Activated CD4-positive, alpha-beta memory T cell treated with anti-CD3 and anti-CD28 coated beads for 36 hours (primary cell): ENCODE measurements at regions of chr15 and their contacts with region 1.

Region 1: DNA sequence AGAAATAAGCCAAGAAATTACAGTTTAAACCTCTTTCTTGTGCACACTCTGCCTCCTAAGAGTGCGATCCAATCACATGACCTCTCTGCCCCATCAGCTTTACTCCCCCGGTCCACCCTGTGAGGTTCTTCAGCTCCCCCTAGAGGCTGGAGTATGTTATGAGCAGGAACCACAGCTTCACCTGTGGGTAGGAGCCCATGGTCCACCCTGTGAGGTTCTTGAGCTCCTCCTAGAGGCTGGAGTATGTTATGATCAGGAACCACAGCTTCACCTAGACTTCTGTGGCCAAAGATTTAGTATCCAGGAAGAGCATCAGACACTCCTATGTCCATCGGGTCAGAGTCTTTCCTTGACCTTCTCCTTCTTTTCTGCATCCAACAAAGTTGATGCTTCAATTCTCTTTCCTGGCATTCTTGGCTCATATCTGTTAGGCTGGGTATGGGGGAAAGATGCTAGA is 163.9 kb downstream of the MINAR1 start:
- DNase-seq: peak; percentile 73
- H3K4me3 Mint-ChIP-seq: no peak overlapping the region
- H3K27ac Mint-ChIP-seq: no peak overlapping the region
- H3K4me1 Mint-ChIP-seq: no peaks in the 10 kb centered on the region
- H3K27me3 Mint-ChIP-seq: peaks cover 12% of the 10 kb centered on the region

Region 2: DNA sequence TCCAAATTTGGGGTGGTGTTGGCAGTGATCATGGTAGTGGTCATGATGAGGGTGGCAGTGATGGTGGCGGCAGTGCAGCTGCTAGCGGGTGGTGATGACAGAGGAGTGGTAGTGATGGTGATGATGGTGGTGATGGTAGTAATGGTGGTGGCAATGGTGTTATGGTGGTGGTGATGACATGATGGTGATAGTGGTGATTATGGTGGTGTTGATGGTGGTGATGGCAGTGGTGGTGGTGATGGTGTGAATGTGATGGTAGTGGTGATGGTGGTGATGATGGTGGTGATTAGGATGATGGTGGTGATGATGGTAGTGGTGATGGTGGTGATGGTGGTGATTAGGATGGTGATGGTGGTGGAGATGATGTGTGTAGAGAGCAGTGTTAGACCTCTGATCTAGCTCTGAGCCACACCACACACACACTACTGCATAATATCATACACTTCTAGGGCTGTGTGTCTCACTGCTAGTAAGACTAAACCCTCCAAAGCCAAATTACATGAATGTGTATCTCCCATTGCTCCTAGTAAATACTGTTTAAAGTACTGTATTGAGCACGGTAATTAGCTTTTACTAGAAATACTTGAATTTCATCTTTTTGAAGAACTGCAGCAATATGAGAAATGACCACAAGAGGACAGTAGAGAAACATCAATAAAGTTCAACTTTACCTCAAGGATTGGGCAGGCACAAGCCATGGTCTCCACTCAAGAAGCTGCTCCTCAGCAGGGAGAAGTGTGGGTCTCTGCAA is 256.3 kb before region 1 on chr15:
- CTCF ChIA-PET with region 1: interaction called, 25 read pairs
- POLR2A ChIA-PET with region 1: no interaction called
- intact Hi-C with region 1: no loop called
- DNase-seq: no peak
- H3K4me3 Mint-ChIP-seq: no peak overlapping the region
- H3K27ac Mint-ChIP-seq: no peak overlapping the region
- H3K4me1 Mint-ChIP-seq: no peaks in the 10 kb centered on the region
- H3K27me3 Mint-ChIP-seq: no peaks in the 10 kb centered on the region

Region 3: GRCh38 chr15:79467865-79468586 is 128.1 kb before region 1 on chr15:
- CTCF ChIA-PET with region 1: no interaction called
- POLR2A ChIA-PET with region 1: no interaction called
- intact Hi-C with region 1: no loop called
- DNase-seq: no peak
- H3K4me3 Mint-ChIP-seq: no peak overlapping the region
- H3K27ac Mint-ChIP-seq: no peak overlapping the region
- H3K4me1 Mint-ChIP-seq: no peaks in the 10 kb centered on the region
- H3K27me3 Mint-ChIP-seq: no peaks in the 10 kb centered on the region

Region 4: DNA sequence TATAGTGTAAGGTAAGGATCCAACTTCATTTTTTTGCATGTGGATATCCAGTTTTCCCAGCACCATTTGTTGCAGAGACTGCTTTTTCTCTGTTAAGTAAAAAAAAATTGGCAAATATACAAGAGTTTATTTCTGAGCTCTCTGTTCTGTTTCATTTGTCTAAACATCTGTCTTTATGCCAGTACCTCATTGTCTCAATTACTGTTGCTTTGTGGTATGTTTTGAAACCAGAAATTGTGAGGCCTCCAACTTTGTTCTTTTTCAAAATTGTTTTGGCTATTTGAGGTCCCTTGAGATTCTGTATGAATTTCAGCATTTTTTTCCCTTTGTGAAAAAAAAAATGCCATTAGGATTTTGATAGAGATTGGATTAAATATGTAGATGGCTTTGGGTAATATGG is 13.4 kb before region 1 on chr15:
- CTCF ChIA-PET with region 1: interaction called, 15 read pairs
- POLR2A ChIA-PET with region 1: no interaction called
- intact Hi-C with region 1: no loop called
- DNase-seq: no peak
- H3K4me3 Mint-ChIP-seq: no peak overlapping the region
- H3K27ac Mint-ChIP-seq: no peak overlapping the region
- H3K4me1 Mint-ChIP-seq: no peaks in the 10 kb centered on the region
- H3K27me3 Mint-ChIP-seq: peaks cover 10% of the 10 kb centered on the region

Region 5: GRCh38 chr15:79606831-79607355 is 10.8 kb after region 1 on chr15:
- CTCF ChIA-PET with region 1: interaction called, 14 read pairs
- POLR2A ChIA-PET with region 1: no interaction called
- intact Hi-C with region 1: no loop called
- DNase-seq: no peak
- H3K4me3 Mint-ChIP-seq: no peak overlapping the region
- H3K27ac Mint-ChIP-seq: no peak overlapping the region
- H3K4me1 Mint-ChIP-seq: no peaks in the 10 kb centered on the region
- H3K27me3 Mint-ChIP-seq: peaks cover 2% of the 10 kb centered on the region